OCI-LY7 (cell line): ENCODE measurements at regions of chr17 and their contacts with region 1.

Region 1: DNA sequence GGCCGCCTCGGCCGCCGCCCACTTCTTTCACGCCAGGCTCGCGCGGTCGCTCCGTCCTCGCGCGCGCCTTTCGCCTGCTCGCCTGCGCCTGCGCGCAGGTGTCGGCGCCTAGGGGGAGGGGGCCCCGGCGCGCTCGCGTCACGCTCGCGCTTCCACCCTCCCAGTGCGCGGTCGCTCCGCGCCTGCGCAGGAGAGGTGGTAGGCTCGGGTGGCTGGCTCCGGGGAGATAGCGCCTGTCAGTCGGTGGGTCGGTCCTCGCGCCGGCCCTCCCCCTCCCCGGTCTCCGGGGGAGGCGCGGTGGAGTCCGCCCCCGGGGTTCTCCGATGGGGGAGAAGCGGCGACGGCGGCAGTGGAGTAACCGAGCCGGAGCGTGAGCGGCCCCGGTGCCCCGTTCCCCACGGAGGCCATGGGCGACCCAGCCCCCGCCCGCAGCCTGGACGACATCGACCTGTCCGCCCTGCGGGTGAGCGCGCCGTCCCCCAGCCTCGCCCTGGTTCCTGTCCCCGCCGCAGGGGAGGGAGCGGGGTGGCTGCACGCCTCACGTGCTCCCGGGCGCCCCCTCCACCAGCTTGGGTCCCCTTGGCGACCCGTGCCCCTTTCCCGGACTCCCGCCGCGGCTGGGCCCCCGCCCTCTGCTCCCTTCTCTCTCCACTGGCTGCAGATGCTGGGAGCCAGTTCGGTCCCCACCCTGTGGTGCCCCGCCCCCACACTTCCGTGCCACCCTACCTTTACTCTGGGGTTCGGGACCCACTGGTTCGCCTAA is at the start of gene MINK1:
- DNase-seq: peak; percentile 96
- H3K4me3 ChIP-seq: peak within 1 kb of the TSS; percentile 87
- H3K27ac ChIP-seq: peak within 1 kb of the TSS; percentile 49
- H3K4me1 ChIP-seq: peaks cover 23% of the 10 kb centered on the region
- CTCF ChIP-seq: no peak
- total RNA-seq, gene MINK1: 38.3 and 40.6 TPM in 2 replicates

Region 2: DNA sequence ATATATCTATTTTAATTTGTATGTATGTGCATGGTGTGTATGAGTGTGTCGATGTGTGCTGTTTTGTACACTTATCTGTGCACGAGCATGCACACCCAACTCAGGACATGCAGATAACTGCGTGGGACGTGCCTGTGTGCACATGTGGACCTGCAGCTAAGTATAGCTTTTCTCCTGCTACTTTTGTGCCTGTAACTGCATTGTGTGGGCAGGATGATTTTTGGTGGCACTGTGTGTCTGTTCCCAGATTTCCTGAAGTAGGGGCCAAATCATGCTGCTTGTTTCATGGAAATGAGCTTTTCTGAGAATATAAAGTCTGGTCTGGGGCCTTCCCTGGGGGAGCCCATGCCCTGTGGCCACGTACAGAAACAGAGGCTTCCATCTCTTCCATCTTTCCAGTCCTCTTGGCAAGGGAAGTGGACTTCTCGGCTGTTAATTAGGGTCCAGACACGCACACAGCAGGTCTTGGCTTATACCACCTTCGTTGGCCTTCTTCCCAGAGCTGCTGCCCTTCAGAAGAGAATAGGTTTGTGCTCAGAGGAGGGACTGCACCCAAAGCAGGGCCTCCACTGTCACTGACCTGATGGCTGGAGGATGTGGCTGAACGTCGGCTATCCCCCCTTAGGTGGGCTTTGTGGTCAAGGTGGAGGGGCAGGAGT is 369.4 kb before region 1 on chr17:
- CTCF ChIA-PET with region 1: no interaction called
- POLR2A ChIA-PET with region 1: no interaction called
- intact Hi-C with region 1: no loop called
- DNase-seq: no peak
- H3K4me3 ChIP-seq: no peak overlapping the region
- H3K27ac ChIP-seq: no peak overlapping the region
- H3K4me1 ChIP-seq: no peaks in the 10 kb centered on the region
- CTCF ChIP-seq: no peak

Region 3: DNA sequence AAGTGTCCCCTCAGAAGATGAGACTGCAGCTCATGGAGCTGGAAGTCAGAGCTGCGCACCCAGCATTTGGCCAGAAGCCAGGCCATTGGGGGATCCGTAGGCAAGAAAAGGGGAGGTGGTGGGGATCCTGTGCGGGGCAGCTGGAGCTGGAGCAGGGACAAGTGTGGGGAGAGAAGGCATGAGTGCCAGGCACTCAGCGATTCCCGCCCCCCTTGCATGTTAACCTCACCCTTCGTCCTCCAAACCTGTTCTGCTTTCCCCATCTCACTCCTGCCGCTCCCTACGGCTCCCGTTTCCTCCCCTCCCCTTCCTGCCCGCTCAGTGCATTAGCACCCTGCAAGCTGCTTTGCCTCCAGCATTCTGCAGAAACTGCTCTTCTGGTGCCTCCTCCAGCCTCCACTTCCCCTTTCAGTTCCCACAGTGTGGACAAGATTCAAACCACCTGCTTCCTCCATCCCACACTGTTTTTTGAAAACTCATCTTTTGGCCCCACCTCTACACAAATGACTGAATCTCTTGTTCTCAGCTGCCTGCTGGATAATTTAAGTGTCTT is 197.5 kb before region 1 on chr17:
- CTCF ChIA-PET with region 1: no interaction called
- POLR2A ChIA-PET with region 1: no interaction called
- intact Hi-C with region 1: loop called (anchors 5 kb)
- DNase-seq: peak; percentile 79
- H3K4me3 ChIP-seq: peak overlapping the region; percentile 66
- H3K27ac ChIP-seq: peak overlapping the region; percentile 65
- H3K4me1 ChIP-seq: peaks cover 31% of the 10 kb centered on the region
- CTCF ChIP-seq: no peak

Region 4: DNA sequence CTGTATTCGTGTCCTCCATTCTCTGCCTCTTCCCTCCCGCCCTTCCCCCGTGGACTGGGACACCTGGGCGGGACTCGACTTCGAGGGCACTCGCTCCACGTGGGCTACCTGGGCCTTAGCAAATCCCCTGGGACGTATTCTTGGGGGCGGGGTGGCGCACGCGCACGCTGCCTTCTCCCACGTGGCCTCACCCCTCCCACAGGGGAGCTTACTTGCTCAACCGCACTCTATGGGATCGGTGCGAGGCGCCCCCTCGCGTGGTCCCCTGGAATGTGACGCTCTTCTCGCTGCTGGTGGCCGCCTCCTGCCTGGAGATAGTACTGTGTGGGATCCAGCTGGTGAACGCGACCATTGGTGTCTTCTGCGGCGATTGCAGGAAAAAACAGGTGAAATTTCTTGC is 50.7 kb before region 1 on chr17:
- CTCF ChIA-PET with region 1: no interaction called
- POLR2A ChIA-PET with region 1: no interaction called
- intact Hi-C with region 1: no loop called
- DNase-seq: no peak
- H3K4me3 ChIP-seq: no peak overlapping the region
- H3K27ac ChIP-seq: no peak overlapping the region
- H3K4me1 ChIP-seq: no peaks in the 10 kb centered on the region
- CTCF ChIP-seq: no peak

Region 5: GRCh38 chr17:4806777-4807604 is 26.4 kb before region 1 on chr17 and contains the start of gene PLD2:
- CTCF ChIA-PET with region 1: no interaction called
- POLR2A ChIA-PET with region 1: no interaction called
- intact Hi-C with region 1: loop called (anchors 2 kb)
- DNase-seq: peak; percentile 91
- H3K4me3 ChIP-seq: peak within 1 kb of the TSS; percentile 86
- H3K27ac ChIP-seq: no peak within 1 kb of the TSS
- H3K4me1 ChIP-seq: peaks cover 12% of the 10 kb centered on the region
- CTCF ChIP-seq: no peak
- total RNA-seq, gene PLD2: 6.6 and 10.2 TPM in 2 replicates

Region 6: DNA sequence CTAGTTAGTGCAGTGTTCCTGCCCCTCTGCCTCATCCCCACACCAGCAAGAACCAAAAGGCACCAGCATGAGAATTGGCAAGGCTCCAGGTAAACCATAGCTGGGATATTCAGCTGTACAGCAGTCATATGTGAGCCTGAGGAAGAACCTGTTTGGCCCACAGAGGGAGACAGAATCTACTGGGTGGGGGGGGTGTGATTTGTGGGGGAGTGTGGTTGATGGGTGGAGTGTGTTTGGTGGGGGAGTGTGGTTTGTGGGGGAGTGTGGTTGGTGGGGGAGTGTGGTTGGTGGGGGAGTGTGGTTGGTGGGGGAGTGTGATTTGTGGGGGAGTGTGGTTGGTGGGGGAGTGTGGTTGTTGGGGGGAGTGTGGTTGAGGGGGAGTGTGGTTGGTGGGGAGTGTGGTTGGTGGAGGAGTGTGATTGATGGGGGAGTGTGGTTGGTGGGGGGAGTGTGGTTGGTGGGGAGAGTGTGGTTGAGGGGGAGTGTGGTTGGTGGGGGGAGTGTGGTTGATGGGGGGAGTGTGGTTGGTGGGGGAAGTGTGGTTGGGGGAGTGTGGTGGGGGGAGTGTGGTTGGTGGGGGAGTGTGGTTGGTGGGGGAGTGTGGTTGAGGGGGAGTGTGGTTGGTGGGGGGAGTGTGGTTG is 19.3 kb after region 1 on chr17:
- CTCF ChIA-PET with region 1: no interaction called
- POLR2A ChIA-PET with region 1: no interaction called
- intact Hi-C with region 1: no loop called
- DNase-seq: no peak
- H3K4me3 ChIP-seq: no peak overlapping the region
- H3K27ac ChIP-seq: no peak overlapping the region
- H3K4me1 ChIP-seq: peaks cover under 1% of the 10 kb centered on the region
- CTCF ChIP-seq: no peak